ENCODE measurements at regions of chr1 and their contacts with region 1.

Region 1: GRCh38 chr1:56821140-56821797 is 2.1 kb upstream of the FYB2 start:
- DNase-seq: peak; percentile 87 to 89
- H3K4me3 ChIP-seq: no peak overlapping the region
- H3K27ac ChIP-seq: peak overlapping the region in 2 of 5 donors; percentile 16 to 26
- H3K4me1 ChIP-seq: peaks cover 8 to 33% (median 26%) of the 10 kb centered on the region in 4 donors
- H3K27me3 ChIP-seq: no peaks in the 10 kb centered on the region
- CTCF ChIP-seq: peak in 5 of 7 experiments; percentile 69 to 89 (median 77)
- EP300 ChIP-seq: no peak
- POLR2A ChIP-seq: no peak

Region 2: GRCh38 chr1:56967900-56968832 is 146.9 kb after region 1 on chr1:
- intact Hi-C with region 1: no loop called
- DNase-seq: peak; percentile 44 to 48
- H3K4me3 ChIP-seq: no peak overlapping the region
- H3K27ac ChIP-seq: no peak overlapping the region
- H3K4me1 ChIP-seq: peaks cover 0 to 7% (median 0%) of the 10 kb centered on the region in 4 donors
- H3K27me3 ChIP-seq: no peaks in the 10 kb centered on the region
- CTCF ChIP-seq: peak in 5 of 7 experiments; percentile 43 to 55 (median 53)
- EP300 ChIP-seq: no peak
- POLR2A ChIP-seq: no peak

Region 3: GRCh38 chr1:57061369-57061768 is 240.1 kb after region 1 on chr1:
- intact Hi-C with region 1: loop called (anchors 10 kb)
- DNase-seq: peak; percentile 30 to 60
- H3K4me3 ChIP-seq: no peak overlapping the region
- H3K27ac ChIP-seq: no peak overlapping the region
- H3K4me1 ChIP-seq: no peaks in the 10 kb centered on the region
- H3K27me3 ChIP-seq: no peaks in the 10 kb centered on the region
- CTCF ChIP-seq: peak in 1 of 7 experiments; percentile 12
- EP300 ChIP-seq: no peak
- POLR2A ChIP-seq: no peak

Measured in stomach (tissue), 19 donors.